IMR-90 (cell line): ENCODE measurements at regions of chr6 and their contacts with region 1.

Region 1: DNA sequence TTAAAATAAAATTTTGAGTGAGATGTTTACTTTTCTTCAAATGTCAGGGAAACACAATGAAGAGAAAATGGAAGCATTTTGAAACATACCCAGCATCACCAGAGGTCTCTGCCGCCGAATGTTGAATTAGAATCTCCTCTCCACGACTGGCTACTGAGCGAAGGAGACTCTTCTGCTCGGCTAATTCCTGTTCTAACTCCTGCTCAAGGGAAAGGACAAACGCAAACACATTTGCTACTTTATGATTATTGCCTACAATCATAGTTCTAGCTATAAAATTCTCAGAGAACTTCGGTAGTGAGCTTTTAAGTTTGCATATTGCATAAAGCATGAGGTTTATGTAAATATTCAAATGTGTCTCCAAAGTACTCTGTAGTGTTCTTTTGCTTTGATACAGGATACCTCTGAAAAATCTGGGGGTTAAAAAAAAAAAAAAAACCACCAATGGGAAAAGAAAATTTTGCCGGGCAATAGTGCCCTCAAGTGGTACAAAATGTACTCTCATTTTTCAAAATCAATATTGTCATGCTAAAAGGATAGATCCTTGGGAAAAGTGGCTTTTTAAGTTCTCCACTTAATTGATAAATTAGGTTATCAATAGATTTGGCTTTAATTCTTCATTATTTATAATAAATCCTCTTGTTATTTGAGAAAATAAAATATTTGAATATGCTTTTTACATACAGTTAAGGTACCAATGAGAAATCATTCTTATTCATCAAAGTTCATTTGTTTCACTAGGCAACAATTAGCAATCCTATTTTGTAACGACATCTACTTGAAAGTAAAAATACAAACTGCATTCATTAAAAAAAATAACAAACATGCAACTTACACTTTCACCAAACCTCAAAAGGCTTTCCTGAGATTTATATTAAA is 369.0 kb downstream of the SYNE1 start:
- DNase-seq: no peak
- ATAC-seq: no peak
- H3K4me3 ChIP-seq: no peak overlapping the region
- H3K27ac ChIP-seq: no peak overlapping the region
- H3K4me1 ChIP-seq: peaks cover 18% of the 10 kb centered on the region
- H3K27me3 ChIP-seq: no peaks in the 10 kb centered on the region
- CTCF ChIP-seq: peak; percentile 63
- POLR2A ChIP-seq: no peak
- RAD21 ChIP-seq: peak; percentile 59

Region 2: GRCh38 chr6:151440930-151441329 is 827.3 kb before region 1 on chr6:
- CTCF ChIA-PET with region 1: no interaction called
- POLR2A ChIA-PET with region 1: no interaction called
- dilution Hi-C with region 1: no loop called
- in situ Hi-C with region 1: no loop called
- intact Hi-C with region 1: loop called (anchors 5 kb)
- DNase-seq: peak; percentile 50
- ATAC-seq: no peak
- H3K4me3 ChIP-seq: no peak overlapping the region
- H3K27ac ChIP-seq: no peak overlapping the region
- H3K4me1 ChIP-seq: peaks cover 4% of the 10 kb centered on the region
- H3K27me3 ChIP-seq: no peaks in the 10 kb centered on the region
- CTCF ChIP-seq: peak; percentile 63
- POLR2A ChIP-seq: no peak
- RAD21 ChIP-seq: peak; percentile 63

Region 3: GRCh38 chr6:151475653-151476523 is 792.3 kb before region 1 on chr6:
- CTCF ChIA-PET with region 1: no interaction called
- POLR2A ChIA-PET with region 1: no interaction called
- dilution Hi-C with region 1: no loop called
- in situ Hi-C with region 1: no loop called
- intact Hi-C with region 1: loop called (anchors 10 kb)
- DNase-seq: peak; percentile 59
- ATAC-seq: peak; percentile 61
- H3K4me3 ChIP-seq: no peak overlapping the region
- H3K27ac ChIP-seq: 0 out of 2 replicates have a peak overlapping the region, but pooled peaks have one; percentile 16
- H3K4me1 ChIP-seq: 0 out of 2 replicates have a peak, but pooled peaks cover 3% of the 10 kb centered on the region
- H3K27me3 ChIP-seq: no peaks in the 10 kb centered on the region
- CTCF ChIP-seq: peak; percentile 75
- POLR2A ChIP-seq: no peak
- RAD21 ChIP-seq: peak; percentile 62

Region 4: GRCh38 chr6:151675746-151676416 is 592.3 kb before region 1 on chr6:
- CTCF ChIA-PET with region 1: no interaction called
- POLR2A ChIA-PET with region 1: no interaction called
- dilution Hi-C with region 1: no loop called
- in situ Hi-C with region 1: no loop called
- intact Hi-C with region 1: loop called (anchors 2 kb)
- DNase-seq: peak; percentile 4
- ATAC-seq: peak; percentile 48; the same call in 1 of the 2 replicates
- H3K4me3 ChIP-seq: no peak overlapping the region
- H3K27ac ChIP-seq: no peak overlapping the region
- H3K4me1 ChIP-seq: no peaks in the 10 kb centered on the region
- H3K27me3 ChIP-seq: no peaks in the 10 kb centered on the region
- CTCF ChIP-seq: peak; percentile 52
- POLR2A ChIP-seq: no peak
- RAD21 ChIP-seq: peak; percentile 49

Region 5: GRCh38 chr6:151765444-151765886 is 502.7 kb before region 1 on chr6:
- CTCF ChIA-PET with region 1: no interaction called
- POLR2A ChIA-PET with region 1: no interaction called
- dilution Hi-C with region 1: no loop called
- in situ Hi-C with region 1: loop called (anchors 10 kb)
- intact Hi-C with region 1: loop called (anchors 1 kb)
- DNase-seq: peak; percentile 77
- ATAC-seq: peak; percentile 70
- H3K4me3 ChIP-seq: no peak overlapping the region
- H3K27ac ChIP-seq: no peak overlapping the region
- H3K4me1 ChIP-seq: 0 out of 2 replicates have a peak, but pooled peaks cover 1% of the 10 kb centered on the region
- H3K27me3 ChIP-seq: no peaks in the 10 kb centered on the region
- CTCF ChIP-seq: peak; percentile 70
- POLR2A ChIP-seq: no peak
- RAD21 ChIP-seq: peak; percentile 62

Region 6: GRCh38 chr6:152129691-152130151 is 138.5 kb before region 1 on chr6:
- CTCF ChIA-PET with region 1: interaction called, 4 read pairs
- POLR2A ChIA-PET with region 1: no interaction called
- dilution Hi-C with region 1: no loop called
- in situ Hi-C with region 1: no loop called
- intact Hi-C with region 1: loop called (anchors 2 kb)
- DNase-seq: peak; percentile 60
- ATAC-seq: peak; percentile 91
- H3K4me3 ChIP-seq: peak overlapping the region; percentile 25; the same call in 1 of the 2 replicates
- H3K27ac ChIP-seq: peak overlapping the region; percentile 98
- H3K4me1 ChIP-seq: peaks cover 8% of the 10 kb centered on the region
- H3K27me3 ChIP-seq: no peaks in the 10 kb centered on the region
- CTCF ChIP-seq: no peak
- POLR2A ChIP-seq: no peak
- RAD21 ChIP-seq: no peak

Region 7: GRCh38 chr6:152206072-152206818 is 62.0 kb before region 1 on chr6:
- CTCF ChIA-PET with region 1: no interaction called
- POLR2A ChIA-PET with region 1: no interaction called
- dilution Hi-C with region 1: no loop called
- in situ Hi-C with region 1: no loop called
- intact Hi-C with region 1: loop called (anchors 5 kb)
- DNase-seq: peak; percentile 8
- ATAC-seq: no peak
- H3K4me3 ChIP-seq: no peak overlapping the region
- H3K27ac ChIP-seq: no peak overlapping the region
- H3K4me1 ChIP-seq: no peaks in the 10 kb centered on the region
- H3K27me3 ChIP-seq: no peaks in the 10 kb centered on the region
- CTCF ChIP-seq: peak; percentile 38
- POLR2A ChIP-seq: no peak
- RAD21 ChIP-seq: no peak

Region 8: DNA sequence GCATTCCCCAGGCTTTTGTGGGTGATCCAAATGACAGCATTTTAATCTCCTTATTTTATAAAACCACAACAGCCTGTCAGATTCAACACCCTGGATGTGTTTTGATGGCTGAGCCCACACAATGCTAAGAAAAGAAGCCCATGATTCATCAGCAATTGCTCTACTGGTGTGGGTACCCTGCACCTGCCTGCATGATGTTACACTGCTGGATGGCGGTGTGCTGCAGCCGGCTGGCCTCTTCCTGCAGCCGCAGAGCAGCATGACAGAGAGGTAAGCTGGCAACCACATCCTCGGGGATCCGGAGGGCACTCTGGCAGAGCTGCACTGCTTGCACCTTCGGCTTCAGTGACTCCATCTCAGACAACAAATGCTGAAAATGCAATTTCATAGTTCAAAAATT is 41.4 kb after region 1 on chr6:
- CTCF ChIA-PET with region 1: no interaction called
- POLR2A ChIA-PET with region 1: no interaction called
- dilution Hi-C with region 1: no loop called
- in situ Hi-C with region 1: no loop called
- intact Hi-C with region 1: no loop called
- DNase-seq: no peak
- ATAC-seq: no peak
- H3K4me3 ChIP-seq: no peak overlapping the region
- H3K27ac ChIP-seq: no peak overlapping the region
- H3K4me1 ChIP-seq: peaks cover 11% of the 10 kb centered on the region
- H3K27me3 ChIP-seq: no peaks in the 10 kb centered on the region
- CTCF ChIP-seq: no peak
- POLR2A ChIP-seq: no peak
- RAD21 ChIP-seq: no peak

Region 9: GRCh38 chr6:152329638-152330448 is 61.6 kb after region 1 on chr6:
- CTCF ChIA-PET with region 1: no interaction called
- POLR2A ChIA-PET with region 1: no interaction called
- dilution Hi-C with region 1: no loop called
- in situ Hi-C with region 1: no loop called
- intact Hi-C with region 1: no loop called
- DNase-seq: no peak
- ATAC-seq: no peak
- H3K4me3 ChIP-seq: no peak overlapping the region
- H3K27ac ChIP-seq: no peak overlapping the region
- H3K4me1 ChIP-seq: no peaks in the 10 kb centered on the region
- H3K27me3 ChIP-seq: no peaks in the 10 kb centered on the region
- CTCF ChIP-seq: no peak
- POLR2A ChIP-seq: no peak
- RAD21 ChIP-seq: no peak

Region 10: DNA sequence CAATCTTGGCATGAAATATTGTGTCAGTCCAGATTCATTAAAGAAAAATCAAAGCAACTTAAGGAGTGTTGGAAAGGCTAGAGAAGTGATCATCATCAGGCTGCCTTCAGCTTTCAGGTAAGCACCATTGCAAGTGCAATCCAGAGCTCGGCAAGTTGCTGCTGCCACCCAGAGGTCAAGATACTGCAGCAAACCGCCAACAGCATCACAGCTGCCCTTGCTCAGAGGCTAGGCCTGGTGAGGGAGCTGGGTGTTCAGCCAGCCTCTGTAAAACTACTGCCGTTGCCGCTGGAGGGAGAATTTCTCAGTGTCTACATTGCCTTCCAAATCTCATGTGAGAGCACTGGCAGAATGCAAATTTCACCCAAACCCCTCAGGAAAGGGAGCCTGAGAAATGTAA is 374.8 kb after region 1 on chr6:
- CTCF ChIA-PET with region 1: no interaction called
- POLR2A ChIA-PET with region 1: no interaction called
- dilution Hi-C with region 1: no loop called
- in situ Hi-C with region 1: no loop called
- intact Hi-C with region 1: no loop called
- DNase-seq: peak; percentile 55
- ATAC-seq: peak; percentile 98
- H3K4me3 ChIP-seq: no peak overlapping the region
- H3K27ac ChIP-seq: no peak overlapping the region
- H3K4me1 ChIP-seq: no peaks in the 10 kb centered on the region; the same call in 1 of the 2 replicates
- H3K27me3 ChIP-seq: no peaks in the 10 kb centered on the region
- CTCF ChIP-seq: peak; percentile 53
- POLR2A ChIP-seq: no peak
- RAD21 ChIP-seq: peak; percentile 61

Region 11: GRCh38 chr6:152750694-152751093 is 482.5 kb after region 1 on chr6 and contains the start of gene VIP:
- CTCF ChIA-PET with region 1: no interaction called
- POLR2A ChIA-PET with region 1: no interaction called
- dilution Hi-C with region 1: no loop called
- in situ Hi-C with region 1: no loop called
- intact Hi-C with region 1: no loop called
- DNase-seq: peak; percentile 42
- ATAC-seq: peak; percentile 81
- H3K4me3 ChIP-seq: no peak within 1 kb of the TSS
- H3K27ac ChIP-seq: no peak within 1 kb of the TSS
- H3K4me1 ChIP-seq: no peaks in the 10 kb centered on the region
- H3K27me3 ChIP-seq: no peaks in the 10 kb centered on the region
- CTCF ChIP-seq: no peak
- POLR2A ChIP-seq: no peak
- RAD21 ChIP-seq: no peak
- total RNA-seq, gene VIP: not detected in 2 replicates